Endothelial cell of umbilical vein (primary cell): ENCODE measurements at regions of chr15 and their contacts with region 1.

Region 1: DNA sequence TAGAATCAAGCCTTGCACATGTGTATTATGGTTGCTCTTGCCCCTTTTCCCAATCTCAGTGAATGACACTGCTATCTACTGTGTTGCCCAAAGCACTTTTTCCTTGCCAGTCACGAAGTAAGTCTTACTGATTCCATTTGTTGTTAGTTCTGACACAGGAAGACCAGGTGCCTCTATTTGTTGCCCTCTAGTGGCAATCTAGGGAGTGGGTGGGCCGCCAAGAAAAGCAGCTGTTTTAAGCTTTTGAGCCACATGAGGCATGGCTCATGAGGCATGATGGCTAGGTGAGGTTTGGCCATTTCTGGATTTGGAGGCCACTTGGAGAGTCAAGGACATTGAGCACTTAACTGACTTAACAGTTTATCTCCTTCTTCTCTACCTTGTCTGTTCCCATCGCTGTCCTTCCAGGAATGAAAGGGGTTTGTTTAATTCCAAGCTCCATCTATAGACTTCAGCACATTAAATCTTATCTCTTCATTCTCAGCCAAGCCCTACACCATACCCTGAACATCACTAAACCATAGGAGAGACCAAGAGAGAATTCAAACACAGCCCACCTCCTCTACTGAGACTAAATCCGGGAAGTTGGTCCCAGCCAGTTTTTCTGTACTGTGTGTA is 103.1 kb downstream of the HCN4 start:
- DNase-seq: peak; percentile 57
- H3K4me3 ChIP-seq: no peak overlapping the region
- H3K27ac ChIP-seq: no peak overlapping the region
- H3K4me1 ChIP-seq: no peaks in the 10 kb centered on the region
- H3K27me3 ChIP-seq: no peaks in the 10 kb centered on the region
- CTCF ChIP-seq: peak; percentile 63 to 71
- POLR2A ChIP-seq: no peak

Region 2: GRCh38 chr15:73249499-73249898 is 16.1 kb before region 1 on chr15:
- CTCF ChIA-PET with region 1: interaction called, 22 read pairs
- POLR2A ChIA-PET with region 1: no interaction called
- dilution Hi-C with region 1: no loop called
- intact Hi-C with region 1: no loop called
- DNase-seq: no peak
- H3K4me3 ChIP-seq: no peak overlapping the region
- H3K27ac ChIP-seq: no peak overlapping the region
- H3K4me1 ChIP-seq: no peaks in the 10 kb centered on the region
- H3K27me3 ChIP-seq: peaks cover 0 to 5% of the 10 kb centered on the region in 2 experiments
- CTCF ChIP-seq: no peak
- POLR2A ChIP-seq: no peak

Region 3: GRCh38 chr15:73284090-73284716 is 18.6 kb after region 1 on chr15:
- CTCF ChIA-PET with region 1: interaction called, 20 read pairs
- POLR2A ChIA-PET with region 1: no interaction called
- dilution Hi-C with region 1: no loop called
- intact Hi-C with region 1: no loop called
- DNase-seq: peak; percentile 35
- H3K4me3 ChIP-seq: no peak overlapping the region
- H3K27ac ChIP-seq: no peak overlapping the region
- H3K4me1 ChIP-seq: no peaks in the 10 kb centered on the region
- H3K27me3 ChIP-seq: no peaks in the 10 kb centered on the region
- CTCF ChIP-seq: peak in 1 of 2 donors; percentile 13
- POLR2A ChIP-seq: no peak